Activated naive CD4-positive, alpha-beta T cell treated with anti-CD3 and anti-CD28 coated beads for 36 hours (primary cell): ENCODE measurements at regions of chr10 and their contacts with region 1.

Region 1: DNA sequence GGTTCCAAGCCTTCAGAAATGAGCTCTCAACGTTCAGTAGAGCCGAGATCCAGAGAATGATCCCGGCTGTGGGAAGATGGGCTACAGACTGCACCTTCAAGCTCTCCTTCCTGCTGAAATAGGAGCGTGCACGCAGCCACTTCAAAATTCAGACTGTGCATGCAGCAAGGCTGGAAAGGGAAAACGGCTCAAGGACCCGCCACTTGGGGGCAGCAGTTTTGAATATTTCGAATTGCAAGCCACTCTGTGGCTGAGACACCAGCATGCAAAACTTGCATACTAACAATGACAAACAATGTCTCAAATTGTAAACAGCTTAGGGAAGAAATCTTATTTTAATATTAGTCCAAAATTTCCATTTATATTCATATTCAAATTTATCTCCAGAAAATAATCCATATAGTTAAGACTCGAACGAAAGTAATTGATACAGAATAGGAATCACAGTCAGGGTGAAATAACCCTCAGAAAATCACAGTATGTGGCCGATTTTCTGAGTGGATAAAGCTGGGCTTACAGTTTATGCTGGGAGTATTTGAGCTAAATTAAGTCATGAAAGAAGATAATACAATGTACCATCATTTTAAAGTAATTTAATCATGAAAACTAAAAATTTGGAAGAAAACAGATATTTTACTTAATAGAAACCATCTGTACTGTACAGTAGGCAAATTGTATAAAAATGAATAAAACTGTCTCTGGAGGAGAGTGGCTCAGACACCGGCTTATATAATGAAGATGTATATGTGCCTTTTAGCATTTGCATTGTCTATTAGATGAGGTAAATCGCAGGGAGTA is 137.9 kb upstream of the MKI67 start:
- DNase-seq: peak; percentile 74
- H3K4me3 Mint-ChIP-seq: no peak overlapping the region
- H3K27ac Mint-ChIP-seq: no peak overlapping the region
- H3K4me1 Mint-ChIP-seq: no peaks in the 10 kb centered on the region
- H3K27me3 Mint-ChIP-seq: peaks cover 30% of the 10 kb centered on the region

Region 2: DNA sequence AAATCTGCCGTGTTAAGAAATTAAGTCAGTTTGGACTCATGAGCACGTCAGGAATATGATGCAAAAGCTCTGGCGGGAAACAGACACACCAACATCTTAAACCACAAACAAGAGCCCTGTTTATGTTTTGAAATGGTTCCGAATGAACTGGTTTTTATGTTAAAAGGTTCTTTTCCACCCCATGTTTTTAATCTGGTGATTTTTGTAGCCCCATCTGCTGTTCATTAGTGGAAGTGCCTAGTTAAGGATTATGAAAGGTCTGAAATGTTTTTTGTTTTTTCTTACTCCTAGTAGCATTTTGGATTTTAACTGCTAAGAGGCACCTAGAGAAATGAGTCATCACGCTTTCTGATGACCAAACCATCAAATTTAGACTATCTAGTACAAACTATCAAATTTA is 266.2 kb after region 1 on chr10:
- CTCF ChIA-PET with region 1: interaction called, 3 read pairs
- intact Hi-C with region 1: loop called (anchors 5 kb)
- DNase-seq: no peak
- H3K4me3 Mint-ChIP-seq: no peak overlapping the region
- H3K27ac Mint-ChIP-seq: no peak overlapping the region
- H3K4me1 Mint-ChIP-seq: no peaks in the 10 kb centered on the region
- H3K27me3 Mint-ChIP-seq: peaks cover 6% of the 10 kb centered on the region

Region 3: GRCh38 chr10:128859738-128860386 is 595.8 kb after region 1 on chr10:
- CTCF ChIA-PET with region 1: no interaction called
- intact Hi-C with region 1: loop called (anchors 2 kb)
- DNase-seq: peak; percentile 64
- H3K4me3 Mint-ChIP-seq: no peak overlapping the region
- H3K27ac Mint-ChIP-seq: no peak overlapping the region
- H3K4me1 Mint-ChIP-seq: no peaks in the 10 kb centered on the region
- H3K27me3 Mint-ChIP-seq: peaks cover 2% of the 10 kb centered on the region